PC-9 (cell line): ENCODE measurements at regions of chr9 and their contacts with region 1.

Region 1: GRCh38 chr9:92177591-92177990 is 62.4 kb upstream of the SPTLC1 start:
- DNase-seq: no peak
- H3K4me3 ChIP-seq: no peak overlapping the region
- H3K27ac ChIP-seq: no peak overlapping the region
- H3K4me1 ChIP-seq: no peaks in the 10 kb centered on the region
- H3K27me3 ChIP-seq: peaks cover 18% of the 10 kb centered on the region
- CTCF ChIP-seq: no peak

Region 2: GRCh38 chr9:92097997-92098482 is 79.6 kb before region 1 on chr9:
- CTCF ChIA-PET with region 1: interaction called, 11 read pairs
- POLR2A ChIA-PET with region 1: no interaction called
- intact Hi-C with region 1: no loop called
- DNase-seq: no peak
- H3K4me3 ChIP-seq: no peak overlapping the region
- H3K27ac ChIP-seq: no peak overlapping the region
- H3K4me1 ChIP-seq: peaks cover 24% of the 10 kb centered on the region
- H3K27me3 ChIP-seq: no peaks in the 10 kb centered on the region
- CTCF ChIP-seq: no peak

Region 3: DNA sequence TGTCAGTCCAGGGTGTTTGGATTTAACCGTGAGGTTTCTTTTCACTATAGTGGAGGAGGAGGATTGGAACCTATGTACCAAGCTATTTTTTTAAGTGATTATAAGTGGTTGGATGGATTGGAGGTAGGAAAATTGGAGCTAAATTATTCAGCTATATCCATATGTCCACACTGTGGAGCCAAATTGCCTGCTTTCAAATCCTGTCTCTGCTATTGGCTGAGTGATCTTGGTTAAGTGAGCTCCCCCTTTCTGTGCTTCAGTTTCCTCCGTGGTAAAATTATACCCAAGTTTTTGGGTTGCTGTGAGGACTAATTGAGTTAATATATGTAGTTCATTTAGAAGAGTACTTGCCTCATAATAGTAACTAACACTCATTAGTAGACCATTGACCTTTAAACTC is 150.6 kb after region 1 on chr9:
- CTCF ChIA-PET with region 1: no interaction called
- POLR2A ChIA-PET with region 1: no interaction called
- intact Hi-C with region 1: no loop called
- DNase-seq: no peak
- H3K4me3 ChIP-seq: no peak overlapping the region
- H3K27ac ChIP-seq: no peak overlapping the region
- H3K4me1 ChIP-seq: peaks cover 22% of the 10 kb centered on the region
- H3K27me3 ChIP-seq: no peaks in the 10 kb centered on the region
- CTCF ChIP-seq: no peak; the same call in 1 of the 2 replicates